ENCODE measurements at regions of chr14 and their contacts with region 1.

Region 1: DNA sequence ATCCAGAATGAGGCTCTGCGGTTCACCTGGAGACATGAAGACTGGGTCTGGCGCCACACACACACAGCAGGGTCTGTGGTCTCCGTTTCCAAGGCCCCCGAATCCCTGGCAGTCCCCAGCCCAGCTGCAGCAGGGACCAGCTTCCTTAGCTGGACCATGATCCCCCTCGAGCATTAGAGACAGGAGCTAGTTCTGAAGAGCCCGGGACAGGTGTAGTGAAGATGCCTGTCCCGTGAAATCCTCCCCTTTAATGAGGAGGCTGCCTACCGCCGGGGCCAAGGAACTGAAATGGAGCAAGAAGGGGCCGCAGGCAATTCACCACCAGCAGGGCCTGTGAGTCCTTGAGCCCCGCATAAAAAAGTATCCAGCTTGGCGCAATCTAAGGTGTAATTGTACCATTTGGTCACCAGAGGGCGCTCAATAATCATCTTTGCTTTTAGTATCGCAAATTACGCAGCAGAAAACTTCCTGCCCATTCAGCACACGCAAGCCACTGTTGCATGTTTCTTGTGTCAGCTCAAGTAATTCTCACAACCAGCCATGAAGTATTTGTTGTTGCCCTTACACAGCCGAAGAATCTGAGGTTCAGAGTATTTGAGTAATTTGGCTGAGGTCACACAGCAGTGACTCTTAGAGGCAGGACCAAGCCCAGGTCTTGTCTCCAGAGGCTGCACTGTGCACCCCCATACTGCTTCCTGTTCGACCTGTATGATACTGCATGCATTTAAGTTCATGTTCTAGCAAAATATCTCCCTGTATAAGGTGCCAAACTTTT is 54.3 kb upstream of the PPP2R5C start:
- DNase-seq: peak; percentile 33 to 87 (median 79)
- ATAC-seq: peak; percentile 83
- H3K4me3 ChIP-seq: peak overlapping the region; percentile 8
- H3K4me3 Mint-ChIP-seq: peak overlapping the region; percentile 32 to 83 (median 75)
- H3K27ac ChIP-seq: peak overlapping the region; percentile 82
- H3K27ac Mint-ChIP-seq: peak overlapping the region; percentile 36 to 95 (median 90)
- H3K4me1 ChIP-seq: peaks cover 24 to 39% of the 10 kb centered on the region in 2 donors
- H3K4me1 Mint-ChIP-seq: peaks cover 17 to 48% (median 35%) of the 10 kb centered on the region in 7 donors
- H3K27me3 ChIP-seq: no peaks in the 10 kb centered on the region
- H3K27me3 Mint-ChIP-seq: peaks cover 0 to 25% (median 0%) of the 10 kb centered on the region in 5 donors

Region 2: DNA sequence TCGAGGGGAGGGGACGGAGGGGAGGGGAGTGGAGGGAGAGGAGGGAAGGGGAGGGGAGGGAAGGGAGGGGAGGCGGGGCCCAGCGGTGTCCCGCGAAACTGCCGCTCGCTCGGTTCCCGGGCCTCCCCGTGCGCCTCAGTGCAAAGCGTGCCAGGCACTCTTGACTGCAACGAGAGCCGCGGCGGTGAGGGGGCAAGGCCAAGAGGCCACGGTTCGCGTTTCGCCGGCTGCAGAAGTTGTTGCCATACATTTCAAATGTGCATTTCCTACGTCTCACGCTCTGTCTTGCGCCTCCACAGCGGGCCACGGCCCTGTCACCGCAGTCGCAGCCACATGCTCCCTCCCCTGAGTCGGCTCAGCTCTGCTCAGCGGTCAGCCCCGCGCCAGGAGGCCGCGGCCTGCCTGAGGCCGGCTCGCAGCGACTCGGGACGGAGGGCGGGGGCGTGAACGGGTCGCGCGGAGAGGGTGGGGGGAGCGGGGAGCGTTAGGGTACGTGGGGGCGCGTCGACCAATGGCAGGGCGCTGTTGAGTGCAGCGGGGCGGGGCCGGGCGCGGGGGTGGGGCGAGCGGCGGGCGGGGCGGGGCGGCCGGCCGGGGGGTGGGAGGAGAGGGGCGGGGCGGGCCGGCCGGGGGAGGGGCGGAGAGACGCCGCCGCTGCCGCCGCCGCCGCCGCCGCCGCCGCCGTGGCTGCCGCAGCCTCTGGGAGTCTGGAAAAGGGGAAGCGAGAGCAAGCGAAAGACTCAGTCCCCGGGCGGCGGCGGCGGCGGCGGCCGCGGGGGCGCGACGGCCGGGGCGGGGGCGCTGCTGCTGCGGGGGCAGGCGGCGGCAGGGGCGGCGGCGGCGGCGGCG is 54.0 kb after region 1 on chr14 and contains the start of gene PPP2R5C:
- CTCF ChIA-PET with region 1: interaction called, 17 read pairs
- POLR2A ChIA-PET with region 1: interaction called, 38 read pairs
- intact Hi-C with region 1: loop called (anchors 1 kb)
- DNase-seq: peak; percentile 73 to 90 (median 87)
- ATAC-seq: peak; percentile 73
- H3K4me3 ChIP-seq: peak within 1 kb of the TSS; percentile 94
- H3K4me3 Mint-ChIP-seq: peak within 1 kb of the TSS; percentile 89 to 96 (median 93)
- H3K27ac ChIP-seq: peak within 1 kb of the TSS; percentile 91
- H3K27ac Mint-ChIP-seq: peak within 1 kb of the TSS; percentile 69 to 95 (median 91)
- H3K4me1 ChIP-seq: peaks cover 11 to 14% of the 10 kb centered on the region in 2 donors
- H3K4me1 Mint-ChIP-seq: peaks cover 30 to 56% (median 38%) of the 10 kb centered on the region in 7 donors
- H3K27me3 ChIP-seq: no peaks in the 10 kb centered on the region
- H3K27me3 Mint-ChIP-seq: peaks cover 0 to 11% (median 0%) of the 10 kb centered on the region in 5 donors
- total RNA-seq, gene PPP2R5C: 266 to 449 (median 405) TPM

Region 3: GRCh38 chr14:101809671-101810514 is 102.6 kb after region 1 on chr14:
- CTCF ChIA-PET with region 1: interaction called, 3 read pairs
- POLR2A ChIA-PET with region 1: interaction called, 19 read pairs
- intact Hi-C with region 1: loop called in 1 of 2 experiments (anchors 1 kb)
- DNase-seq: peak; percentile 57 to 97 (median 95)
- ATAC-seq: peak; percentile 94
- H3K4me3 ChIP-seq: peak overlapping the region; percentile 92
- H3K4me3 Mint-ChIP-seq: peak overlapping the region; percentile 94 to 98 (median 96)
- H3K27ac ChIP-seq: peak overlapping the region; percentile 99
- H3K27ac Mint-ChIP-seq: peak overlapping the region; percentile 90 to 100 (median 99)
- H3K4me1 ChIP-seq: peaks cover 36 to 38% of the 10 kb centered on the region in 2 donors
- H3K4me1 Mint-ChIP-seq: peaks cover 27 to 62% (median 55%) of the 10 kb centered on the region in 7 donors
- H3K27me3 ChIP-seq: no peaks in the 10 kb centered on the region
- H3K27me3 Mint-ChIP-seq: no peaks in the 10 kb centered on the region

Region 4: DNA sequence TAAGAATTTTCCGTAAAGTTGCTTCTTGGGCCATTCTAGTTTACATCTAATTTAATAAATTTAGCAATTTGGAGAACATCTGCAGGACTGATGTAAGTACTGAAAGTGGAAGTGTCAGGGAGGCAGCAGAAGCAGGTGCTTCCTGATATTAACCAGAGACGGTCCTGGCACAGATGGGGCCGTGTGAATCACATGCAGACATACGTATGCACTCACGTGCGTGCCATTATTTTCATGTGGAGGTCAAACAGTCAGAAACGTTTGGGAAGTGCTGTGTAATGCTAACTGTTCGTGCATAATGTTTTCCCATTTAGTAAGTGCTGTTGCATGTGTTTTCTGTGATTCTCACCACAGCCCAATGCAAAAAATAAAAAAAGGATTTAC is 169.3 kb after region 1 on chr14:
- CTCF ChIA-PET with region 1: interaction called, 3 read pairs
- POLR2A ChIA-PET with region 1: interaction called, 6 read pairs
- intact Hi-C with region 1: loop called in 1 of 2 experiments (anchors 1 kb)
- DNase-seq: peak in 8 of 9 donors; percentile 42 to 85 (median 68)
- ATAC-seq: peak; percentile 94
- H3K4me3 ChIP-seq: no peak overlapping the region
- H3K4me3 Mint-ChIP-seq: peak overlapping the region; percentile 43 to 87 (median 76)
- H3K27ac ChIP-seq: peak overlapping the region; percentile 72
- H3K27ac Mint-ChIP-seq: peak overlapping the region; percentile 72 to 95 (median 89)
- H3K4me1 ChIP-seq: peaks cover 24 to 52% of the 10 kb centered on the region in 2 donors
- H3K4me1 Mint-ChIP-seq: peaks cover 42 to 96% (median 78%) of the 10 kb centered on the region in 7 donors
- H3K27me3 ChIP-seq: no peaks in the 10 kb centered on the region
- H3K27me3 Mint-ChIP-seq: no peaks in the 10 kb centered on the region

Region 5: DNA sequence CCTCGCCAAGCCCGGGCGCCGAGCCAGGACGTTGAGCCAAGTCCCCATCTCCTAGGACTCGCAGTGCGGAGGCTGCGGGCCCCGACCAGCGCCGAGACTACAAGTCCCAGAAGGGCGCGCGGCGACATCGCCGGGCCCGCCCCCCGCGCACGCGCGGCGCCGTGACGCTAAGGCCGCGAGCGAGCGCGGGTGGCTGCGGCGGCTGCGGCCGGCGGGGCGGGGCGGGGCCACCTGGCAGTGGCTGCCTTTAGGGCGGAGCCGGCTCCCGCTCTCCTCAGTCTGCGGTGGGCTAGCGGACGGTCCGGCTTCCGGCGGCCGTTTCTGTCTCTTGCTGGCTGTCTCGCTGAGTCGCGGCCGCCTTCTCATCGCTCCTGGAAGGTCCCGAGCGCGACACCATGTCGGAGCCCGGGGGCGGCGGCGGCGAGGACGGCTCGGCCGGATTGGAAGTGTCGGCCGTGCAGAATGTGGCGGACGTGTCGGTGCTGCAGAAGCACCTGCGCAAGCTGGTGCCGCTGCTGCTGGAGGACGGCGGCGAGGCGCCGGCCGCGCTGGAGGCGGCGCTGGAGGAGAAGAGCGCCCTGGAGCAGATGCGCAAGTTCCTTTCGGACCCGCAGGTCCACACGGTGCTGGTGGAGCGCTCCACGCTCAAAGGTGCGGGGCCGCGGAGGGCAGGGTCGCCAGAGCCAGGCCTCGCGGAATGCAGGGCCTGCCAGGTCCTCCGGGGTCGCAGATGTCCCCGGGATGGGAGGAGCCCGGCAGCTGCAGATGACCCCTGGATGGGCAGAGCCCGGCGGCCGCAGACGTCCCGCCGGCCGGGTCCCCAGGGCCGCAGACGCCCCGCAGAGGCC is 257.3 kb after region 1 on chr14 and contains the start of gene DYNC1H1:
- CTCF ChIA-PET with region 1: no interaction called
- POLR2A ChIA-PET with region 1: interaction called, 3 read pairs
- intact Hi-C with region 1: loop called (anchors 1 to 2 kb)
- DNase-seq: peak; percentile 82 to 94 (median 90)
- ATAC-seq: peak; percentile 94
- H3K4me3 ChIP-seq: peak within 1 kb of the TSS; percentile 77
- H3K4me3 Mint-ChIP-seq: peak within 1 kb of the TSS; percentile 85 to 92 (median 90)
- H3K27ac ChIP-seq: peak within 1 kb of the TSS; percentile 88
- H3K27ac Mint-ChIP-seq: peak within 1 kb of the TSS; percentile 76 to 93 (median 91)
- H3K4me1 ChIP-seq: peaks cover 20% of the 10 kb centered on the region in 2 donors
- H3K4me1 Mint-ChIP-seq: peaks cover 33 to 55% (median 50%) of the 10 kb centered on the region in 7 donors
- H3K27me3 ChIP-seq: no peaks in the 10 kb centered on the region
- H3K27me3 Mint-ChIP-seq: peaks cover 0 to 2% (median 0%) of the 10 kb centered on the region in 5 donors
- total RNA-seq, gene DYNC1H1: 252 to 310 (median 273) TPM

Region 6: GRCh38 chr14:102139248-102140026 is 432.2 kb after region 1 on chr14 and contains the start of gene WDR20:
- CTCF ChIA-PET with region 1: no interaction called
- POLR2A ChIA-PET with region 1: no interaction called
- intact Hi-C with region 1: loop called in 1 of 2 experiments (anchors 2 kb)
- DNase-seq: peak; percentile 98 to 100 (median 99)
- ATAC-seq: peak; percentile 98
- H3K4me3 ChIP-seq: peak within 1 kb of the TSS; percentile 80
- H3K4me3 Mint-ChIP-seq: peak within 1 kb of the TSS; percentile 96 to 99 (median 98)
- H3K27ac ChIP-seq: peak within 1 kb of the TSS; percentile 90
- H3K27ac Mint-ChIP-seq: peak within 1 kb of the TSS; percentile 95 to 99 (median 96)
- H3K4me1 ChIP-seq: peaks cover 18 to 22% of the 10 kb centered on the region in 2 donors
- H3K4me1 Mint-ChIP-seq: peaks cover 17 to 36% (median 26%) of the 10 kb centered on the region in 7 donors
- H3K27me3 ChIP-seq: no peaks in the 10 kb centered on the region
- H3K27me3 Mint-ChIP-seq: no peaks in the 10 kb centered on the region
- total RNA-seq, gene WDR20: 33.1 to 67.8 (median 47.5) TPM